CD8-positive, alpha-beta T cell (primary cell): ENCODE measurements at regions of chr15 and their contacts with region 1.

Region 1: DNA sequence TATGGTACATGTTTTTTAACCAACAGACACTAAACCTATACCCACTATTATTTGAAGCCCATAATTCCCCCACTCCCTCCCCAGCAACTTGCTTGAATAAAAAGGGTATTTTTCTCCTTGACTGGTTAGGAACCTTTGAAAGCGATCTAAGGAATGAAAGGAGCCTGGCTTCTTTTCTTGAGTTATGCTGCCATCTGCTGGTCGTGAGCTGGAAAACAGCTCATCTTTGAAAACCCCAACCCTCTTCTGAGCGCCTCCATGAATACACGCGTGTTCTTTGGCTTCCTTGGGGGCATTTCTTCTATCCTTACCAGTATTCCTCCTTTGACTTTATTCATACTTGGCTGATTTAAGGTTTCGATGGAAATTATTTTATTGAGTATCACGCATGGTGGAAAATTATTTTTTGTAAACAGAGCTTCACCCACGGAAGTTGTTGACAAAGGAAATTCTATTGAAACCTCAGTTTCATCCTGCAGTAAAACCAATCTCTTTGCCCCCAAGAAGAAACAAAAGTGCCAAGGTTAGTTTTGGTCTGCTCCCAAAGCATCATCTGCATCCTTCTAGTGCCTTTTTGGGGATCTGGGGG is 171.6 kb downstream of the SV2B start:
- DNase-seq: peak; percentile 24 to 80 (median 60)
- ATAC-seq: peak; percentile 42
- H3K4me3 ChIP-seq: no peak overlapping the region
- H3K4me3 Mint-ChIP-seq: no peak overlapping the region
- H3K27ac ChIP-seq: no peak overlapping the region
- H3K27ac Mint-ChIP-seq: no peak overlapping the region
- H3K4me1 ChIP-seq: no peaks in the 10 kb centered on the region
- H3K4me1 Mint-ChIP-seq: peaks cover 5% of the 10 kb centered on the region
- H3K27me3 ChIP-seq: peaks cover 0 to 3% of the 10 kb centered on the region in 2 experiments
- H3K27me3 Mint-ChIP-seq: peaks cover 22% of the 10 kb centered on the region
- CTCF ChIP-seq: peak; percentile 74

Region 2: DNA sequence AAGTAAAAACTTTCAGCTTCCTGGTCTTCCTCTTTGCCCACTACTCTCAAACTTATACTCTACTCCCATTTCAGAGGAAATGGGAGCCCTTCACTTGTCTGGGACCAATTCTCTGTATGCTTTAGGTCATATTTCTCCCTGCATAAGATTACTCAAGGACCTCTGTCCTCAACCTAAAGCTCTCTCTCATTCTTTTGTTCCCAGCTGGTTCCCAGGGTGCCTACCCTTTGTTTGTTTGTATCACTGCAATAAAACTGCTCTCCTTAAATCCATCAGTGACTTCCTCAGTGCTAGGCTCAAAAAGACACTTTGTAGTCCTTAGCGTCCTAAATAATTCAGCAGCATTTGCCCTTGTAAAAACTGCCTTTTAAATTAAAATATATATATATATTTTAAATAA is 1003.2 kb before region 1 on chr15:
- CTCF ChIA-PET with region 1: no interaction called
- POLR2A ChIA-PET with region 1: no interaction called
- intact Hi-C with region 1: no loop called
- DNase-seq: no peak
- ATAC-seq: no peak
- H3K4me3 ChIP-seq: no peak overlapping the region
- H3K4me3 Mint-ChIP-seq: peak overlapping the region; percentile 70
- H3K27ac ChIP-seq: no peak overlapping the region
- H3K27ac Mint-ChIP-seq: peak overlapping the region; percentile 73
- H3K4me1 ChIP-seq: peaks cover 59% of the 10 kb centered on the region
- H3K4me1 Mint-ChIP-seq: peaks cover 78% of the 10 kb centered on the region
- H3K27me3 ChIP-seq: no peaks in the 10 kb centered on the region
- H3K27me3 Mint-ChIP-seq: no peaks in the 10 kb centered on the region
- CTCF ChIP-seq: no peak

Region 3: DNA sequence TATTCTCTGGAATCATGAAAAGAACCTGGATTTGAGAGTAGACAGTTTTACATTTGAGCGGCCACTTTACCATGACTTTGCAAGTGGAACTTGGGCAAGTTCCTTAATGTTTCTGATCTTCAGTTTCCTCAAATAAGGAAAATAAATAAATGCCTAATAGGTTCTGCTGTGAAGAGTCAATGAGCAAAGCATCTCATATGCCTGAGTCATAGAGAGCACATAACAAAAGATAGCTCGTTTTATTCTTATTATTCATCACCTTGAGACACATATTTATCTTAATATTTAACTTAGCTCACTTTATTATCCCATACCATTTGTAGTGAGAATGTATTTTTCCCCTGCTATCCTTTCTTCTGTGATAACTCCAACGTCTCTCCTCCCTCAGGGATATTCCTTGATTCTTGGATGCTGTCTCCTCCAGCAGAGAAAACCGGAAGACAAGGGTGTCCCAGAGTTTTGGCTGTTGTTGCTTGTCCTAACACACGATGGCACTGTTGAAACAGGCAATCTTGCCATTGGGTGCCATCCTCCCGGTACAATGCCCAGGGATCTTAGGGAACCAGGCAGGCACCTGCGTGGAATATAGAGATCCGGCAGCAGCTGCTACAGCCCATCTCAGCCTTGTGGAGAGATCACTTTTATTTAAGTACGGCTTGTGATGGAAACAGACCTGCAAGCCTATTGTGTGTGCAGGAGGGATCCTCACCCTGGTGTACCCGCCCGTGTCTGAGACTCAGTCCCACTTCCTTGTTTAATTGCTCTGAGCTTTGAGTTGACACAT is 215.9 kb before region 1 on chr15:
- CTCF ChIA-PET with region 1: interaction called, 55 read pairs
- POLR2A ChIA-PET with region 1: no interaction called
- intact Hi-C with region 1: loop called in 1 of 2 experiments (anchors 1 kb)
- DNase-seq: peak in 5 of 9 experiments; percentile 6 to 53 (median 30)
- ATAC-seq: no peak
- H3K4me3 ChIP-seq: no peak overlapping the region
- H3K4me3 Mint-ChIP-seq: no peak overlapping the region
- H3K27ac ChIP-seq: no peak overlapping the region
- H3K27ac Mint-ChIP-seq: no peak overlapping the region
- H3K4me1 ChIP-seq: no peaks in the 10 kb centered on the region
- H3K4me1 Mint-ChIP-seq: no peaks in the 10 kb centered on the region
- H3K27me3 ChIP-seq: peaks cover 0 to 2% of the 10 kb centered on the region in 2 experiments
- H3K27me3 Mint-ChIP-seq: peaks cover 57% of the 10 kb centered on the region
- CTCF ChIP-seq: peak; percentile 34

Region 4: GRCh38 chr15:91258425-91258779 is 13.3 kb before region 1 on chr15:
- CTCF ChIA-PET with region 1: interaction called, 17 read pairs
- POLR2A ChIA-PET with region 1: no interaction called
- intact Hi-C with region 1: no loop called
- DNase-seq: peak in 1 of 9 experiments; percentile 26
- ATAC-seq: no peak
- H3K4me3 ChIP-seq: no peak overlapping the region
- H3K4me3 Mint-ChIP-seq: no peak overlapping the region
- H3K27ac ChIP-seq: no peak overlapping the region
- H3K27ac Mint-ChIP-seq: no peak overlapping the region
- H3K4me1 ChIP-seq: no peaks in the 10 kb centered on the region
- H3K4me1 Mint-ChIP-seq: no peaks in the 10 kb centered on the region
- H3K27me3 ChIP-seq: peaks cover 0 to 9% of the 10 kb centered on the region in 2 experiments
- H3K27me3 Mint-ChIP-seq: peaks cover 24% of the 10 kb centered on the region
- CTCF ChIP-seq: no peak

Region 5: GRCh38 chr15:91282486-91282885 is 10.8 kb after region 1 on chr15:
- CTCF ChIA-PET with region 1: interaction called, 10 read pairs
- POLR2A ChIA-PET with region 1: no interaction called
- intact Hi-C with region 1: no loop called
- DNase-seq: no peak
- ATAC-seq: no peak
- H3K4me3 ChIP-seq: no peak overlapping the region
- H3K4me3 Mint-ChIP-seq: no peak overlapping the region
- H3K27ac ChIP-seq: no peak overlapping the region
- H3K27ac Mint-ChIP-seq: no peak overlapping the region
- H3K4me1 ChIP-seq: no peaks in the 10 kb centered on the region
- H3K4me1 Mint-ChIP-seq: no peaks in the 10 kb centered on the region
- H3K27me3 ChIP-seq: no peaks in the 10 kb centered on the region
- H3K27me3 Mint-ChIP-seq: peaks cover 28% of the 10 kb centered on the region
- CTCF ChIP-seq: no peak